Right lobe of liver (tissue), 6 donors: ENCODE measurements at regions of chr6 and their contacts with region 1.

Region 1: GRCh38 chr6:165850434-165851019 is 187.5 kb upstream of the PDE10A start:
- DNase-seq: peak; percentile 70 to 76 (median 73)
- ATAC-seq: peak; percentile 91 to 98 (median 97)
- H3K4me3 ChIP-seq: no peak overlapping the region
- H3K27ac ChIP-seq: no peak overlapping the region
- H3K4me1 ChIP-seq: no peaks in the 10 kb centered on the region
- H3K27me3 ChIP-seq: peaks cover 0 to 10% of the 10 kb centered on the region in 2 donors
- CTCF ChIP-seq: peak; percentile 89 to 99 (median 99)
- POLR2A ChIP-seq: no peak

Region 2: DNA sequence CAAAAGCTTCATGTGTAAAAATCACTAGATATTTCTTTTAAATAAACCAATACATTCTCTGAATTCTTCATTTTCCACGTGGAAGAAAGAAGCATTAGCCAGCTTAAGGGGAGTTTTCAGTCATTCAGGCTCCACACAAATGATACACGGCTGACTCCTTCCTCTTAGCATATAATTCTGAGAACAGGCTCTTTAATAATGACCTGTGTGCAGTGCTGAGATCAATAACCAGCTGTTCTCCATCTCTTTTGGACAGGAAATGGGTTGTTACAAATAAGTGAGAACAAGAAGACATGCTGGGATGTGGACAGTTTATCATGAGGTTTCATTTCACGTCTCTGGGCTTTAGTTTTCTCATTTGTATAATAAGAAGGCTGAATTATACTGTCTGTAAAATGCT is 394.2 kb before region 1 on chr6:
- intact Hi-C with region 1: loop called in 1 of 2 experiments (anchors 10 kb)
- DNase-seq: no peak
- ATAC-seq: no peak
- H3K4me3 ChIP-seq: no peak overlapping the region
- H3K27ac ChIP-seq: no peak overlapping the region
- H3K4me1 ChIP-seq: no peaks in the 10 kb centered on the region
- H3K27me3 ChIP-seq: no peaks in the 10 kb centered on the region
- CTCF ChIP-seq: no peak
- POLR2A ChIP-seq: no peak

Region 3: GRCh38 chr6:165729307-165729936 is 121.1 kb before region 1 on chr6:
- intact Hi-C with region 1: loop called (anchors 5 kb)
- DNase-seq: peak in 1 of 3 donors; percentile 68
- ATAC-seq: peak; percentile 81 to 89 (median 84)
- H3K4me3 ChIP-seq: no peak overlapping the region
- H3K27ac ChIP-seq: no peak overlapping the region
- H3K4me1 ChIP-seq: no peaks in the 10 kb centered on the region
- H3K27me3 ChIP-seq: no peaks in the 10 kb centered on the region
- CTCF ChIP-seq: peak; percentile 68 to 89 (median 84)
- POLR2A ChIP-seq: no peak